Activated CD4-positive, alpha-beta memory T cell treated with anti-CD3 and anti-CD28 coated beads for 36 hours (primary cell): ENCODE measurements at regions of chr5 and their contacts with region 1.

Region 1: DNA sequence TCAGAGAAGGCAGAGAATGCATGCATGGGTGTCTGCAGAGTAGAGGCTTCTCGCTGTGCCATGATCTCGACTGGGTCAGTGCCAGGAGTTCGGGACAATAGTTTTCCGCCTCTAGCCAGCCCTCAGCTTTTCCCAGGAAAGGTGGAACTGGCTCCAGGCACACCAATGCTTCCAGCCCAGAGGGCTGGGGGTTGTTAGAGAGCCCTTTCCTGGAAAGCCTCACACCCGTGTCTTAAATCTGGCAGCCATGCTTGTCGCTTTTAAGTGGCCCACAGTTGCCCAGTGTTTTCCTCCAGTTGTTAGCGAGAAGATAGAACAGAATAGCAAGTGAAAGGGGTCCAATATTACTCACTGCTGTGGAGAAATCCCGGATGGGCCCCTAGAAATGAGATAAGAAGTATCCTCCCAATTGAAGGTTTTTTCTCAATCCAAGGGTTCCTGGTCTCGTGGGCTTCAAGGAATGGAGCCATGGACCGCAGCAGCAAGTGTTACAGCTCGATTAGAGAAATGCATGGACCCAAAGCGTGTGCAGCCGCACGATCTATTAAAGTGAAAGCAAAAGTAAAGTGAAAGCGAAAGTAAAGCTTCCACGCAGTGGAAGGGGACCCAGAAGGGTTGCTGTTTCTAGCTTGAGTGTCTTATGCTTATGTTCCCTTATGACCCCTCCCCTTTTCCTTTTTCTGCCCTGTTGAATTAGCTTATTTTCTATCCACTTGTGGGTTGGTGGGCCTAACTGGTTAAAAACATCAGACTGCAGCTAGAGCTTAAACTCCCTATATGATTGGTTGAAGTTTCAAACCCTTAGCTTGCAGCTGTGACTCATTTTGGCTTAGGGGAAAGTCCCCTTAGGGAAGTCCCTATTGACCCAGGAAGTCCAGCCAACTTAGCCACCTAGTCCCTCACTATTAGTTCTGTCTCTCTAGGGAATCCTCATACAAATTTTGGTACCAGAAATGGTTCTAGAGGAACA is 1111.7 kb downstream of the TAF11L14 start:
- DNase-seq: peak; percentile 49
- H3K4me3 Mint-ChIP-seq: peak overlapping the region; percentile 85
- H3K27ac Mint-ChIP-seq: peak overlapping the region; percentile 84
- H3K4me1 Mint-ChIP-seq: peaks cover 59% of the 10 kb centered on the region
- H3K27me3 Mint-ChIP-seq: no peaks in the 10 kb centered on the region

Region 2: DNA sequence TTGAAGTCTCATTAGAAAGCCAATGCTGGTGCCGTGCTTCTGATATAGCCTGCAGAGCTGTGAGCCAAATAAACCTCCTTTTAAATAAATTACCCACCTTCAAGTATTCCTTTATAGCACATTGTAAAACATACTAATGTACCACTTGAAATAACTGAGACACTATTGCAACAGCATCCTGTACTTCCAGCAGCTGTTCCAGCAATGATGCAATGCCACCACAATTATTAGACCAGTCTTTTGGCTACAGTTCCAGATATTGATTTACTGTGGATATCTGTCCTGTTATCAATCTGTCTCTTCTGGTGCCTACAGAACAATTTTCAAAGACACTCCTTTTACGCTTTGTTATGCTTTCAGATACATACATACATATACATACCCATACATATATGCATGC is 543.8 kb before region 1 on chr5:
- CTCF ChIA-PET with region 1: no interaction called
- POLR2A ChIA-PET with region 1: no interaction called
- intact Hi-C with region 1: no loop called
- DNase-seq: no peak
- H3K4me3 Mint-ChIP-seq: no peak overlapping the region
- H3K27ac Mint-ChIP-seq: no peak overlapping the region
- H3K4me1 Mint-ChIP-seq: no peaks in the 10 kb centered on the region
- H3K27me3 Mint-ChIP-seq: no peaks in the 10 kb centered on the region

Region 3: GRCh38 chr5:18761801-18762200 is 15.9 kb after region 1 on chr5:
- CTCF ChIA-PET with region 1: interaction called, 4 read pairs
- POLR2A ChIA-PET with region 1: interaction called, 3 read pairs
- intact Hi-C with region 1: loop called (anchors 2 kb)
- DNase-seq: no peak
- H3K4me3 Mint-ChIP-seq: peak overlapping the region; percentile 5
- H3K27ac Mint-ChIP-seq: no peak overlapping the region
- H3K4me1 Mint-ChIP-seq: peaks cover 9% of the 10 kb centered on the region
- H3K27me3 Mint-ChIP-seq: peaks cover 1% of the 10 kb centered on the region